T-cell (primary cell): ENCODE measurements at regions of chr14 and their contacts with region 1.

Region 1: DNA sequence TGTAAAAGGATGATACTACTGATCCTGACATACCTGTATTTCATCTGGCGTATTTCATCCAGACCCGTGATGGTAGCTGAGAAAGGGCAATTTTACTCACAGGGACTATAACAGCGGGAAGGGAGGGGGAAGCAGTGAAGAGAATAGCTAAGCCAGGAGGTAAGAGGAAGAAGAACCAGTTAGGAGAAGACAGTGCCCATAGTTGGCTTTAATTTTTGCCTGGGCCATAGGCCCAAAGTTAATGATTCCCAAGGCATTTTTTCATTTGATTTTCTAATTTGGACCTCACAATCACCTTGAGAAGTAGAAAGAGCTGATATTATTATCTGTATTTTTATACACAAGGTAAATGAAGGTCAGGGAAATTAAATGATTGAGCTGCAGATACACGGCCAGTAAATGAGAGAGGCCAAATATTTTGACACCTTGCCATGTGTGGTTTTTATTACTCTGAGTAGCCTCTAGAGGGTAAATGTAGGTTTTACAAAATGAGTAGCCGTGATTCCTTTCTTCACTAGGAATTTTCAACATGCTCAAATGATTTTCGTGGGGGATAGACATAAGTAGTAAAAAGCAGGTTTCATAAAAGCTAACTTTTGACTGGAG is 382.2 kb downstream of the FUT8 start:
- DNase-seq: no peak
- ATAC-seq: no peak
- H3K4me3 ChIP-seq: no peak overlapping the region
- H3K4me3 Mint-ChIP-seq: no peak overlapping the region
- H3K27ac ChIP-seq: no peak overlapping the region
- H3K27ac Mint-ChIP-seq: no peak overlapping the region
- H3K4me1 ChIP-seq: peaks cover 0 to 13% of the 10 kb centered on the region in 2 experiments
- H3K4me1 Mint-ChIP-seq: no peaks in the 10 kb centered on the region
- H3K27me3 ChIP-seq: peaks cover 0 to 16% of the 10 kb centered on the region in 2 experiments
- H3K27me3 Mint-ChIP-seq: no peaks in the 10 kb centered on the region

Region 2: DNA sequence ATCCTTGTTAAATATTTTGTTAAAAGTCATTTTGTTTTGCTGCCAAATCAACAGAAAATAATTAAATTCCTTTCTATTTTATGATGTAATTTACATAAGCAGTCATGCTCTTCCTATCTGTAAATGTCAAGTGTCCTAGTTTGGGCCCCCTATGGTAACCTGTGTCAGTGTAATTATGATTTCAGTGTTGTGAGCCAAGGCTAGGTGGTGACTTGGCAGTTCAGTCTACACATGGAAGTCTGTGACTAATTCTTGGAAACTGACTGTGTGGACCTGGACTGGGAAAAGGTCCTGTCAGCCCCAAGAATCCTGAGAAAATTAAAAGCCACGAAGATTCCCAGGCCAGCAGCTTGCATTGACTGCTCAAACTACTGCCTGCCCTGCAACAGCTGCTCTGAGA is 11.2 kb before region 1 on chr14:
- CTCF ChIA-PET with region 1: no interaction called
- POLR2A ChIA-PET with region 1: interaction called in 1 of 2 experiments, 10 read pairs
- DNase-seq: no peak
- ATAC-seq: no peak
- H3K4me3 ChIP-seq: no peak overlapping the region
- H3K4me3 Mint-ChIP-seq: no peak overlapping the region
- H3K27ac ChIP-seq: no peak overlapping the region
- H3K27ac Mint-ChIP-seq: no peak overlapping the region
- H3K4me1 ChIP-seq: no peaks in the 10 kb centered on the region
- H3K4me1 Mint-ChIP-seq: no peaks in the 10 kb centered on the region
- H3K27me3 ChIP-seq: peaks cover 0 to 4% of the 10 kb centered on the region in 2 experiments
- H3K27me3 Mint-ChIP-seq: peaks cover 0 to 11% of the 10 kb centered on the region in 2 donors

Region 3: DNA sequence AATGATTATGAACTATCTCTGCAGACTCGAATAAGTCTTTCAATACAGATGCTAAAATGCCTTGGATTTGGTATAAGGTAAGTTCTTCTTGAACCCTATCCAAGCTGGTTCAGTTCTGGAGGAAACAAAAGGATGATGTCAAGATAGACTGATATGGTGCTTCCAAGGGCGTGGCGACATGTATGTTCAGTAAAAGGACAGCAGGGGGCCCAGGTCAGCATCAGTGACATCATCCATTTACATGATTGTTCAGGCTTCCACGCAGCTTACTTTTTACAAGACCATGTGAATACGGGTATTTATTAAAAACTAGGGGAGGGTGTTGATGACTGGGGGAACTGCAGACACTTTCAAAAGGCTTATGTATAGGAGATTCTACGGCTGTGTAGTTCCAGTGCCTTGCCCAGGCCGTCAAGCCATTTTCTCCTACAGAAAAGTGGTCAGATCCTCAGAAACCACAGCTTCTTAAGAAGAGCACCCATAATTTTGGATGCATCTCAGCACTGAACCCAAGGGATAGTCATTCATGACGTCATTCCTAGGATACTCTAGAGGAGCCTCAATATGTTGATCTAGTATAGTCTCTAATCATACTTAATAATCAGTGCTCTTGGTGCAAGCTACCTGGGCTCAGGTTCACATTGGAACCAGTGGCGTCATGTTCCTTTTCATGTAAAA is 145.4 kb after region 1 on chr14:
- CTCF ChIA-PET with region 1: no interaction called
- POLR2A ChIA-PET with region 1: no interaction called
- DNase-seq: peak in 1 of 35 experiments; percentile 25
- ATAC-seq: no peak
- H3K4me3 ChIP-seq: no peak overlapping the region
- H3K4me3 Mint-ChIP-seq: no peak overlapping the region
- H3K27ac ChIP-seq: no peak overlapping the region
- H3K27ac Mint-ChIP-seq: no peak overlapping the region
- H3K4me1 ChIP-seq: peaks cover 13 to 37% of the 10 kb centered on the region in 2 experiments
- H3K4me1 Mint-ChIP-seq: peaks cover 53 to 75% (median 73%) of the 10 kb centered on the region in 3 donors
- H3K27me3 ChIP-seq: no peaks in the 10 kb centered on the region
- H3K27me3 Mint-ChIP-seq: no peaks in the 10 kb centered on the region